ENCODE measurements at regions of chr1 and their contacts with region 1.

Region 1: GRCh38 chr1:160284782-160285344 is at the start of gene PEX19:
- DNase-seq: peak; percentile 94 to 99 (median 96)

Region 2: DNA sequence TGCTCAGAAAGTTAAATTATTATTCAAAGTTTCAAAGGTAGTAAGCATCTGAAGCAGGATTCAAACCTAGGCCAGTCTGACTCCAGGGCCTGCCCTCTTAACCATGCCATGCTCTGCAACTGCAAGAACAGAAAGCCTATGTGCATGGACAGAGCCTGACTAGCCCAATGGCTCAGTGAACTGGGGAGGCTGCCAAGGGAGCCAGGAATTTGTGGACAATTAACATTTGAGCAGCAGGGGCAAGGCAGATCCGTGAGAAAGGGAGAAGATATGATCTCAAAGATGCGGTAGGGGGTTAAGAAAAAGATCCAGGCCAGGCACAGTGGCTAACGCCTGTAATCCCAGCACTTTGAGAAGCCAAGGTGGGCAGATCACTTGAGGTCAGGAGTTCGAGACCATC is 139.9 kb before region 1 on chr1:
- intact Hi-C with region 1: no loop called
- DNase-seq: peak in 1 of 10 donors; percentile 23

Region 3: GRCh38 chr1:160261893-160262794 is 22.7 kb before region 1 on chr1 and contains the start of gene DCAF8:
- intact Hi-C with region 1: loop called (anchors 2 kb)
- DNase-seq: peak; percentile 95 to 99 (median 98)

Measured in posterior cingulate gyrus (tissue), 11 donors.